CD4-positive, alpha-beta T cell (primary cell): ENCODE measurements at regions of chr3 and their contacts with region 1.

Region 1: DNA sequence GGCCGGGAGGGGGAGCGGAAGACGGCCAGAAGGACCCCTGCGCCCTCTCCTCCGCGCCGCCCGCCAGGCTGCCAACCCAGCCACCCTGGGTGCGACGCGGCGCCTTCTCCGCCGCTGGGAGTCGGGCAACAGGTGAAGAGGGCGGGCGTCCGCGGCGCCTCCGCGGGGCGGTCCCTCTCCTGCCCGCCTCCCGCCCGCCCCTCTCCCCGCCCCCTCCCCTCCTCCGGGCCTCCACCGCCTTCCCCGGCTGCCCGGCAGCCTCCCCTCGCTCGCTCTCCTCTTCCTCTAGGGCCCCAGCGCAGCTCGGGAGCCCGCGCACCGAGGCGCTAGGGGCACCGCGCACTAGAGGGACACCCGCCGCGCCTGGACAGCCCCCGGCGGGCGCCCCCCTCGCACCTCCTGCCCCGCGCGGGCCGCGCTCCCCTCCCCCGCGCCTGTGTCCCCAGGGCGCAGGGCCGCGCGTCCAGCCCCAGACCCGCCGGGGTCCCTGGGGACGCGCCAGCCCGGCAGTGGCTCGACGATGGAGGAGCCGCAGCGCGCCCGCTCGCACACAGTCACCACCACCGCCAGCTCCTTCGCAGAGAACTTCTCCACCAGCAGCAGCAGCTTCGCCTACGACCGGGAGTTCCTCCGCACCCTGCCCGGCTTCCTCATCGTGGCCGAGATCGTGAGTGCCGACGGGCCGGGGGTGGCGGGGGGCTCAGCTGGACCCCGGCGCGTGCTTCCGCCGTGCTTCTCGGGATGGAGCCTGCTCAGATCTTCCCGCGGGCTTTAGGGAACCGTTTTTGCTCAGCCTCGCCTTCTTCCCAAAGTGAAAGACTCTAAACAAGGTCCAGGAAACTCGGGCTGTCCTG is at the start of gene CMTM8:
- DNase-seq: peak; percentile 44 to 89 (median 72)
- ATAC-seq: peak; percentile 82
- H3K4me3 ChIP-seq: peak within 1 kb of the TSS; percentile 80
- H3K4me3 Mint-ChIP-seq: peak within 1 kb of the TSS; percentile 93
- H3K27ac ChIP-seq: no peak within 1 kb of the TSS
- H3K27ac Mint-ChIP-seq: peak within 1 kb of the TSS; percentile 79
- H3K4me1 ChIP-seq: peaks cover 31% of the 10 kb centered on the region
- H3K4me1 Mint-ChIP-seq: peaks cover 51% of the 10 kb centered on the region
- H3K27me3 ChIP-seq: no peaks in the 10 kb centered on the region
- H3K27me3 Mint-ChIP-seq: no peaks in the 10 kb centered on the region
- CTCF ChIP-seq: no peak
- total RNA-seq, gene CMTM8: 6.1 to 7.5 TPM

Region 2: DNA sequence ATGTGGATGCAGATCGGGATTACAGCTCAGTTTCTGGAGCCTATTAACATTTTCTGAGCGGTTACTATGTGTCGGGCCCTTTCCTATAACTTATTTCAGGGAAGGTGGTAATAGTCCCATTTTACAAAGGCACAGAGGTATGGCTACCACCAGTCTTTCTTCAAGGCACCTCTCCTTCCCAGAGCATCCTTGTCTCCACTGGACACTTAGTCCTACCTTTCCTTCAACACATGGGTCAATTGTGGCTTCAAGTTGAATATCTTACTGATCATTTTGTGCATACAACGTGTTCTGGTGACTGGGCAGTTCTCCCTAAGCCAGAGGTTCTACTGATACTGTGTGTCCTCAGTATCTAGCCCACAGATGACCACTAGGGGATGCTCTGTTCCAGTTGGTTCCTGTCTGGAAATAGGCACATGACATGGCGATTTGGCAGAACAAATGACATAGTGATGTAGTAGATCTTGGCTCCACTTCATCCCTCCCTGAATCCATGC is 60.9 kb before region 1 on chr3:
- CTCF ChIA-PET with region 1: interaction called, 13 read pairs
- POLR2A ChIA-PET with region 1: no interaction called
- intact Hi-C with region 1: loop called (anchors 1 to 5 kb)
- DNase-seq: peak in 12 of 14 experiments; percentile 12 to 77 (median 34)
- ATAC-seq: peak; percentile 65
- H3K4me3 ChIP-seq: no peak overlapping the region
- H3K4me3 Mint-ChIP-seq: no peak overlapping the region
- H3K27ac ChIP-seq: no peak overlapping the region
- H3K27ac Mint-ChIP-seq: no peak overlapping the region
- H3K4me1 ChIP-seq: peaks cover 9% of the 10 kb centered on the region
- H3K4me1 Mint-ChIP-seq: peaks cover 12% of the 10 kb centered on the region
- H3K27me3 ChIP-seq: peaks cover 0 to under 1% of the 10 kb centered on the region in 2 experiments
- H3K27me3 Mint-ChIP-seq: no peaks in the 10 kb centered on the region
- CTCF ChIP-seq: peak; percentile 33

Region 3: GRCh38 chr3:32283304-32283703 is 44.6 kb after region 1 on chr3:
- CTCF ChIA-PET with region 1: interaction called, 8 read pairs
- POLR2A ChIA-PET with region 1: interaction called, 24 read pairs
- intact Hi-C with region 1: loop called in 1 of 2 experiments (anchors 5 kb)
- DNase-seq: no peak
- ATAC-seq: no peak
- H3K4me3 ChIP-seq: no peak overlapping the region
- H3K4me3 Mint-ChIP-seq: no peak overlapping the region
- H3K27ac ChIP-seq: no peak overlapping the region
- H3K27ac Mint-ChIP-seq: peak overlapping the region; percentile 87
- H3K4me1 ChIP-seq: peaks cover 27% of the 10 kb centered on the region
- H3K4me1 Mint-ChIP-seq: peaks cover 41% of the 10 kb centered on the region
- H3K27me3 ChIP-seq: no peaks in the 10 kb centered on the region
- H3K27me3 Mint-ChIP-seq: no peaks in the 10 kb centered on the region
- CTCF ChIP-seq: no peak

Region 4: DNA sequence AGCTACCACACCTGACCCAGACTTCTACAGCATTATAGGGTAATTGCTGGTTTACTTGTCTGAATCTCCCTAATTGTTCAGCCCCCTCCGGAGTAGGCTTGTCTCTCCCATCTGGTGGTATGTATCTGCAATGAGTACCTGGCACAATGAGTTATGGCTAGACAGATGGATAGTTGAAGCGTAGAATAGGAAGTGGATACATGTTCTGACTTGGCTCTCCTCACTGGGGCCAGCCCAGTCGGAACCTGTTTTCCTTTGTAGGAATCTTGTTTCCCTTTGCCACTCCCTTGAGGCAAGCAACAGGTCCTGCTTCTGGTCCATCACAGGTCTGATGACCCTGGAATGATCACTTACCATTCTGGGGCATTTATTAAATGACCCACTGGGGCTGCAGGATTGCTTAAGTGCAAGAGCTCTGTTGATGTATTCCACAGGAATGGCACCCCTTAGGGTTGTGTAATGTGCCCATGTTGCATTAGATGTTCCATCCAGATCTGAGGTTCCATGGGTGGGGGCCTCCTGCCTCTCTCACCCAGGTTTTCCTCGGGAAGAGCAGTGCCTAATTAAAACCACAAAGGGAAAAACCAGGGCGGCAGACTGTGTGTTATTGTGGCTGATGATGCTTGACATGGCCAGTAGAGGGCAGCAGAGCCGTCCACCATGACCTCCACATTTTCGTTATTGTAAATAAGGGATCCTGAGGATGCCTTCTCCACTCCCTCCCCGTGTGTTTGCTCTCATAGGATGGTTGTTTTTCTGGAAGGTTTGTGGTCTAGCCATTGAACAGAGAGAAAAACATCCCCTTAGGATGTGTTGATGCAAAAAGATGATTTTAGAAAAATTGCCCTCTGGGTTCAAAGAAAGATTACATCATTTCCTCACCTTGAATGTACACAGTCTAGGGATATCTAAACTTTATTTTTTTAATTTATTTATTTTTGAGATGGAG is 57.9 kb after region 1 on chr3:
- CTCF ChIA-PET with region 1: interaction called, 10 read pairs
- POLR2A ChIA-PET with region 1: interaction called, 12 read pairs
- intact Hi-C with region 1: loop called in 1 of 2 experiments (anchors 5 kb)
- DNase-seq: peak; percentile 52 to 88 (median 60)
- ATAC-seq: peak; percentile 62
- H3K4me3 ChIP-seq: no peak overlapping the region
- H3K4me3 Mint-ChIP-seq: peak overlapping the region; percentile 76
- H3K27ac ChIP-seq: peak overlapping the region; percentile 60
- H3K27ac Mint-ChIP-seq: peak overlapping the region; percentile 93
- H3K4me1 ChIP-seq: peaks cover 44% of the 10 kb centered on the region
- H3K4me1 Mint-ChIP-seq: peaks cover 43% of the 10 kb centered on the region
- H3K27me3 ChIP-seq: no peaks in the 10 kb centered on the region
- H3K27me3 Mint-ChIP-seq: no peaks in the 10 kb centered on the region
- CTCF ChIP-seq: peak; percentile 93

Region 5: GRCh38 chr3:32334675-32335074 is 96.0 kb after region 1 on chr3:
- CTCF ChIA-PET with region 1: interaction called, 9 read pairs
- POLR2A ChIA-PET with region 1: interaction called, 9 read pairs
- intact Hi-C with region 1: loop called (anchors 5 kb)
- DNase-seq: peak; percentile 50 to 78 (median 67)
- ATAC-seq: peak; percentile 90
- H3K4me3 ChIP-seq: no peak overlapping the region
- H3K4me3 Mint-ChIP-seq: peak overlapping the region; percentile 54
- H3K27ac ChIP-seq: peak overlapping the region; percentile 27 to 40
- H3K27ac Mint-ChIP-seq: peak overlapping the region; percentile 96
- H3K4me1 ChIP-seq: peaks cover 38% of the 10 kb centered on the region
- H3K4me1 Mint-ChIP-seq: peaks cover 67% of the 10 kb centered on the region
- H3K27me3 ChIP-seq: no peaks in the 10 kb centered on the region
- H3K27me3 Mint-ChIP-seq: no peaks in the 10 kb centered on the region
- CTCF ChIP-seq: peak; percentile 65

Region 6: GRCh38 chr3:32502118-32502945 is 263.7 kb after region 1 on chr3 and contains the start of gene CMTM6:
- CTCF ChIA-PET with region 1: no interaction called
- POLR2A ChIA-PET with region 1: no interaction called
- intact Hi-C with region 1: loop called in 1 of 2 experiments (anchors 5 kb)
- DNase-seq: peak; percentile 54 to 90 (median 67)
- ATAC-seq: peak; percentile 78
- H3K4me3 ChIP-seq: peak within 1 kb of the TSS; percentile 79
- H3K4me3 Mint-ChIP-seq: peak within 1 kb of the TSS; percentile 92
- H3K27ac ChIP-seq: peak within 1 kb of the TSS; percentile 88 to 92
- H3K27ac Mint-ChIP-seq: peak within 1 kb of the TSS; percentile 83
- H3K4me1 ChIP-seq: peaks cover 15% of the 10 kb centered on the region
- H3K4me1 Mint-ChIP-seq: peaks cover 43% of the 10 kb centered on the region
- H3K27me3 ChIP-seq: no peaks in the 10 kb centered on the region
- H3K27me3 Mint-ChIP-seq: no peaks in the 10 kb centered on the region
- CTCF ChIP-seq: no peak
- total RNA-seq, gene CMTM6: 36.5 to 37.8 TPM

Region 7: DNA sequence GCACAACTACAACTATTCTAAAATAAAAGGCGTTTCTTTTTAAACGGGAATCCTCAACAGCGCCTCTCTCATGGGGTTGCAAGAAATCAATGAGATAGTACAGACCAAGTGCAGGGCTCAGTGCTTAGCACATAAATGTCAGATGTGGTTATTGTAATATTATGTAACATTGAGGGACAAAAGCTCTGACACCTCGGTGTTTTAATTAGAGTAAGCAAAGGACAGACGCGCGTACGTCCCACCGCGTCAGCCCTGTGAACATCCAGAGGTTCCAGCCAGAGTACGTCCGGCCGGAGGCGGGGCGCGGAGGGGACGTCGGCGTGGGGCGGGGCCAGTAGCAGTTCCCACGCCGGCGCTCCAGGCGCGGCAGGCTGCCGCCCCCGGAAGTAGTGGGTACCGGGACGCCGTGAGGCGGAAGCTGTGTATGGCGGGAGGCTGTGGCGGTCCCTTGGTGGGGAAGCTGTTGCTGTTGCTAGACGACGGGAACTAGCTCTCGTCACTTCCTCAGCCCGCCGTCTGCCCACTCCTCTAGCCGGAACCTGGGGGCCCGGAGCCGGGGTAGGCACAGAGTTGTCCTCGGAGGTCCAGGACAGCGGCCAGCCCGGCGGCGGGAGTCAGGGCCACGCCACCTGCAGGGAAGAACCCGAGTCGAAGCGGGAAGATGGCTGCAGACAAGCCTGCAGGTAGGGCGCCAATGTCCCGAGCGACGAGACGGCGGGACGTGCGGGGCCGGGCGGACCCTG is 446.3 kb after region 1 on chr3 and contains the start of gene CNOT10:
- CTCF ChIA-PET with region 1: no interaction called
- POLR2A ChIA-PET with region 1: no interaction called
- intact Hi-C with region 1: loop called in 1 of 2 experiments (anchors 5 kb)
- DNase-seq: peak; percentile 91 to 98 (median 94)
- ATAC-seq: peak; percentile 87
- H3K4me3 ChIP-seq: peak within 1 kb of the TSS; percentile 92
- H3K4me3 Mint-ChIP-seq: peak within 1 kb of the TSS; percentile 87
- H3K27ac ChIP-seq: peak within 1 kb of the TSS; percentile 74 to 82
- H3K27ac Mint-ChIP-seq: peak within 1 kb of the TSS; percentile 97
- H3K4me1 ChIP-seq: peaks cover 15% of the 10 kb centered on the region
- H3K4me1 Mint-ChIP-seq: peaks cover 41% of the 10 kb centered on the region
- H3K27me3 ChIP-seq: no peaks in the 10 kb centered on the region
- H3K27me3 Mint-ChIP-seq: no peaks in the 10 kb centered on the region
- CTCF ChIP-seq: no peak
- total RNA-seq, gene CNOT10: 31.3 to 42.0 TPM